Mammary epithelial cell (primary cell): ENCODE measurements at regions of chrX and their contacts with region 1.

Region 1: GRCh38 chrX:19040373-19040772 is 56.5 kb upstream of the PHKA2 start:
- DNase-seq: no peak
- H3K4me3 ChIP-seq: no peak overlapping the region
- H3K27ac ChIP-seq: no peak overlapping the region
- H3K4me1 ChIP-seq: no peaks in the 10 kb centered on the region
- H3K27me3 ChIP-seq: no peaks in the 10 kb centered on the region
- CTCF ChIP-seq: peak; percentile 12 to 36

Region 2: DNA sequence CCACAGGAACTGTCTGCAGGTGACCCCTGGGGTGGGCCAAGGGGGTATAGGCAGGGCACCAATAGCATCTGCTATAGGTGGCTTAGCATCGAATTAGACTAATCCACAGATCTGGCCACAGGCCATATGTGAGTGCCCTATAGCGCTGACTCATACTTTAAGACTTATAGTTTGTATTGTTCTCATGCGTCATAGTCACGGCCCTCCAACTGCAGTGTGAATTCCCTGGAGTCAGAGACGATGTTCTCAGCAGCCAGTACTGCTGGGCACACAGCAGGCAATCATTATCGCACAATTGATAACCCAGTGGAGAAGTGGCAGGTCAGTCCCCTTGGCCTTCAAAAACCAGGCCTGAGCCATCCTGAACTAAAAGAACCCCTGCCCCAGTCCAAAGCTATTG is 23.8 kb after region 1 on chrX:
- CTCF ChIA-PET with region 1: no interaction called
- dilution Hi-C with region 1: no loop called
- in situ Hi-C with region 1: no loop called
- intact Hi-C with region 1: no loop called
- DNase-seq: no peak
- H3K4me3 ChIP-seq: no peak overlapping the region
- H3K27ac ChIP-seq: no peak overlapping the region
- H3K4me1 ChIP-seq: no peaks in the 10 kb centered on the region
- H3K27me3 ChIP-seq: no peaks in the 10 kb centered on the region
- CTCF ChIP-seq: no peak

Region 3: GRCh38 chrX:19303256-19303880 is 263.0 kb after region 1 on chrX:
- CTCF ChIA-PET with region 1: no interaction called
- dilution Hi-C with region 1: no loop called
- in situ Hi-C with region 1: loop called in 1 of 2 experiments (anchors 25 kb)
- intact Hi-C with region 1: no loop called
- DNase-seq: peak; percentile 72
- H3K4me3 ChIP-seq: no peak overlapping the region
- H3K27ac ChIP-seq: no peak overlapping the region
- H3K4me1 ChIP-seq: no peaks in the 10 kb centered on the region
- H3K27me3 ChIP-seq: no peaks in the 10 kb centered on the region
- CTCF ChIP-seq: no peak

Region 4: GRCh38 chrX:19805046-19805690 is 764.8 kb after region 1 on chrX:
- CTCF ChIA-PET with region 1: no interaction called
- dilution Hi-C with region 1: no loop called
- in situ Hi-C with region 1: no loop called
- intact Hi-C with region 1: no loop called
- DNase-seq: no peak
- H3K4me3 ChIP-seq: no peak overlapping the region
- H3K27ac ChIP-seq: no peak overlapping the region
- H3K4me1 ChIP-seq: no peaks in the 10 kb centered on the region
- H3K27me3 ChIP-seq: no peaks in the 10 kb centered on the region
- CTCF ChIP-seq: no peak